Activated naive CD4-positive, alpha-beta T cell treated with anti-CD3 and anti-CD28 coated beads for 36 hours (primary cell): ENCODE measurements at regions of chr7 and their contacts with region 1.

Region 1: DNA sequence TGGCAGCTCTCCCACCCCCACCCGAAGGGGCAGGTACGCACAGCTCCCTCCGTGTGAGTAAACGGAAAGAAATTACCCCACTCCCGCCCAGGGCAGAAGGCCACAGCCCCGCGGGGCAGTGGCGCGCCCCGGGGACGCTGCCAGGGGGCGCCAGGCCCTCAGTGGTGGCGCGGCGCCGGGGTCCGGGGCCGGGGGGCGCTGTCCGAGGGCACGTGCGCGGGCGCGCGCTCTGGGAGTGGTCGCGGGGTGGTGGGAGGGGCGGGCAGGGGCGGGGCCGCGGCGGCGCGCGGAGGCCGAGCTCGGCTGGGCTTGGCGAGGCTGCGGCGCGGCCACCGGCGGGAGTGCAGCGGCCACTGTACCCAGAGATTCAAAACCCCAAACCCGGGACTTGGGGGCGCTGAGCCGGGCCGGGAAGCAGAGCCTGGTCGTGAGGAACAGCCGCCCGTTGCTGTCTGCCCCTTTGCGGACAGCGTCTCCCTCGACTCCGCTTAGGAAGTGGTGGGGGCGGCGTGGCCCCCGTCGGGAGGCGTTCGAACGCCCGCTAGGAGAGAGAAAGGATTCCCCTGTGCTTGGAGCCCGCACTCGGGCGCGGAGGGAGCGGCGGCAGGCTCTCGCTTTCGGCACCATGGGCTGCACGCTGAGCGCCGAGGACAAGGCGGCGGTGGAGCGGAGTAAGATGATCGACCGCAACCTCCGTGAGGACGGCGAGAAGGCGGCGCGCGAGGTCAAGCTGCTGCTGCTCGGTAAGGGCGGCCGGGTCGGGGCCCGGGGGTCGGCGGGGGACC is at the start of gene GNAI1:
- DNase-seq: peak; percentile 39
- H3K4me3 Mint-ChIP-seq: peak within 1 kb of the TSS; percentile 74
- H3K27ac Mint-ChIP-seq: peak within 1 kb of the TSS; percentile 66
- H3K4me1 Mint-ChIP-seq: peaks cover 37% of the 10 kb centered on the region
- H3K27me3 Mint-ChIP-seq: peaks cover 48% of the 10 kb centered on the region
- total RNA-seq, gene GNAI1: 2.3 to 2.4 TPM

Region 2: GRCh38 chr7:80095545-80095944 is 39.2 kb before region 1 on chr7:
- CTCF ChIA-PET with region 1: no interaction called
- intact Hi-C with region 1: loop called (anchors 1 kb)
- DNase-seq: no peak
- H3K4me3 Mint-ChIP-seq: no peak overlapping the region
- H3K27ac Mint-ChIP-seq: no peak overlapping the region
- H3K4me1 Mint-ChIP-seq: no peaks in the 10 kb centered on the region
- H3K27me3 Mint-ChIP-seq: no peaks in the 10 kb centered on the region

Region 3: GRCh38 chr7:80172387-80172786 is 37.7 kb after region 1 on chr7:
- CTCF ChIA-PET with region 1: no interaction called
- intact Hi-C with region 1: loop called (anchors 1 kb)
- DNase-seq: no peak
- H3K4me3 Mint-ChIP-seq: peak overlapping the region; percentile 24
- H3K27ac Mint-ChIP-seq: no peak overlapping the region
- H3K4me1 Mint-ChIP-seq: peaks cover 33% of the 10 kb centered on the region
- H3K27me3 Mint-ChIP-seq: peaks cover 8% of the 10 kb centered on the region

Region 4: DNA sequence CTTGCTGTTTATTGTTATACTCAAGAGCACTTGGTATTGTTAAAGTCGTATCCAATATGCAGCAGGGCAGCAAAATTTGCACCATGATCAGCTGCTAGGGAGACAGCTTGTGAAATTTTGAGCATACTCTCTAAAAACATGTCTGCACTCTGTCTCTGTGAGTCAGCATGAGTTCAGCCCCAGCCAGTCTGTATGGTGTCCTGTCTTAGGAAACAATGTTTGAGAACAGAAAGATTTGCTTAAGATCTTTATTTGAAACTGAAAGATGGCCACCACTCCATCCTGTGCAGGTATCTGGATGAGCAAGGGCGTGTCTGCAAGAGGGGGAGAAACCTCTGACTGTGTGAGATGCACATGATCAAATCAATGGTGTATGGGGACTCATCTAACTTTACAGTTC is 97.0 kb after region 1 on chr7:
- CTCF ChIA-PET with region 1: no interaction called
- intact Hi-C with region 1: no loop called
- DNase-seq: peak; percentile 14
- H3K4me3 Mint-ChIP-seq: no peak overlapping the region
- H3K27ac Mint-ChIP-seq: no peak overlapping the region
- H3K4me1 Mint-ChIP-seq: no peaks in the 10 kb centered on the region
- H3K27me3 Mint-ChIP-seq: peaks cover 5% of the 10 kb centered on the region

Region 5: GRCh38 chr7:80288175-80289122 is 153.7 kb after region 1 on chr7:
- CTCF ChIA-PET with region 1: no interaction called
- intact Hi-C with region 1: loop called (anchors 2 kb)
- DNase-seq: no peak
- H3K4me3 Mint-ChIP-seq: no peak overlapping the region
- H3K27ac Mint-ChIP-seq: no peak overlapping the region
- H3K4me1 Mint-ChIP-seq: no peaks in the 10 kb centered on the region
- H3K27me3 Mint-ChIP-seq: no peaks in the 10 kb centered on the region

Region 6: DNA sequence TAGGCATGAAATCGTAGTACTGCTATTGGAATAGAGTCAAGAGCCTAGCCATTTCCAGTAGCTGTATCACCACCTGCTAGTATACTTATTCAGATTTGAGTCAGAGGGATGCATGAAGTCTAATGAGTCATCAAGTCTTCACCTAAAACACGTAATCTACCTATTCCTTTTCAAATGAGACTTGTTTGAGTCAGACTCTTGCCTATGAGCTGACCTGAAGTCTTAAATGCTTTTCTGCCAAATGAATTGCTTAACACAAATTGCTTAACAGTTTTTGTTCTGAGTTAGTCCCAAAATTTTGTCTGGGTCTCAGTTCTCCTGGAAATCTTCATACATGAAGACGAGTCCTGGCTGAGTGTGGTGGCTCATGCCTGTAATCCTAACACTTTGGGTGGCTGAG is 212.0 kb after region 1 on chr7:
- CTCF ChIA-PET with region 1: interaction called, 4 read pairs
- intact Hi-C with region 1: loop called (anchors 1 kb)
- DNase-seq: peak; percentile 6
- H3K4me3 Mint-ChIP-seq: no peak overlapping the region
- H3K27ac Mint-ChIP-seq: peak overlapping the region; percentile 54
- H3K4me1 Mint-ChIP-seq: peaks cover 13% of the 10 kb centered on the region
- H3K27me3 Mint-ChIP-seq: peaks cover 5% of the 10 kb centered on the region

Region 7: GRCh38 chr7:80453699-80454340 is 319.1 kb after region 1 on chr7:
- CTCF ChIA-PET with region 1: interaction called, 5 read pairs
- intact Hi-C with region 1: loop called (anchors 1 kb)
- DNase-seq: peak; percentile 13
- H3K4me3 Mint-ChIP-seq: no peak overlapping the region
- H3K27ac Mint-ChIP-seq: no peak overlapping the region
- H3K4me1 Mint-ChIP-seq: no peaks in the 10 kb centered on the region
- H3K27me3 Mint-ChIP-seq: peaks cover 5% of the 10 kb centered on the region